AG04449 (cell line): ENCODE measurements at regions of chr12 and their contacts with region 1.

Region 1: DNA sequence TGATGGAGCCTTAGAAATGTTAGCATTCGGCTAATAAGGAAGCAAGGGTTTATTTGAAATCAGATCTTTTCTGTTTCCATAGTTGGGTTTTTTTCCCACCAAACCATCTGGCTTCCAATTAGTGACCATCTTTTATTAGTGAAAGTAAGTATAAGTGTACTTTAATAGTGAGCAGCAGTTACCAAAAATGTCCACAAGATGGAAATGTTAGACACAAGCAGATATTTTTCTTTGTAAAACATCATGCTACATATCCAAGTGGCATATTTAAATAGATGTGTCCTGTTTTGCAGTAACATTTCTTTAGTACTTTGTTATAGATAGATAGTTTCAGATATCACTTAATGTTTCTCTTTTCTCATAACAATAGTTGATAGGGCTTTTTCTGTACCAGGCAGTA is 28.8 kb downstream of the YEATS4 start:
- DNase-seq: peak; percentile 29
- H3K4me3 ChIP-seq: no peak overlapping the region
- CTCF ChIP-seq: peak; percentile 44

Region 2: GRCh38 chr12:69553627-69554248 is 165.4 kb after region 1 on chr12:
- CTCF ChIA-PET with region 1: interaction called, 11 read pairs
- POLR2A ChIA-PET with region 1: no interaction called
- DNase-seq: no peak
- H3K4me3 ChIP-seq: no peak overlapping the region
- CTCF ChIP-seq: no peak

Region 3: GRCh38 chr12:69585189-69586062 is 197.1 kb after region 1 on chr12 and contains the start of gene CCT2:
- CTCF ChIA-PET with region 1: interaction called, 13 read pairs
- POLR2A ChIA-PET with region 1: no interaction called
- DNase-seq: peak; percentile 52
- H3K4me3 ChIP-seq: peak within 1 kb of the TSS; percentile 100
- CTCF ChIP-seq: peak; percentile 63